ENCODE measurements at regions of chr16 and their contacts with region 1.

Region 1: DNA sequence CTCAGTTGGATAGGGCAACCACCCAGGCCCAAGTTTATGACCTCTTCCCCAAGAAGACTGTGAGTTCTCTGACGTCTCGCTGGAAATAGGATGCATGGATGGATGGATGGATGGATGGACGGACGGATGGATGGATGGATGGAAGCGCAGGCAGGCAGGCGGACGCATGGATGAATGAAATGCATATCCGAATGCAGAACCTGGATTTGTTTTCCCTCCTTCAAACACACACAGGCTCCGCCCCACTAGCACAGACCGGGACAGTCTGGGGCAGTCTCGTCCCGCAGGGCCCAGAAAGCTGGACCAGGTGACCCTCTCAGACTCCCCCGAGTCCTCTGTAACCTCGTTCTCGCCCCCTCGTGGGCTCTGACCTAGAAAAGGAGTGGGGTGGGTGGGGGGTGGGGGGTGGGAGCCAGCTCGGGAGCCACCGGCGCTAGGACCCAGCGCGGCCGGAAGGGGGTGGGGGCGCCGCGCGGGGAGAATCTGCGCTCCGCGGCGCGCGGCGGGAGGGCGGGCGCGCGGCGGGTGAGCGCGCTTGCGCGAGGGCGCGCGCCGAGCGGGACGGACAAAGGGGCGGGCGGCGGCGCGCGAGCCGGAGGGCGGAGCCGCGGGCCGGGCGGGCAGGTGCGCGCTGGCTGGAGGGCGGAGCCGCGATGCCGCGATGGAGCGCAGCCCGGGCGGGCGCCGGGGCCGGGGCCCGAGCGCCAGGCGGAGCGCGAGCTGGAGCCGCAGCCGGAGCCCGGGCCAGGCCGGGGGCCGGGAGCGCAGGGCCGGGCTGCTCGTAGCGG is at the start of gene SBK1:
- DNase-seq: peak; percentile 79 to 90 (median 88)
- H3K4me3 ChIP-seq: peak within 1 kb of the TSS; percentile 72 to 88
- H3K4me3 Mint-ChIP-seq: peak within 1 kb of the TSS; percentile 93 to 97 (median 95)
- H3K27ac ChIP-seq: peak within 1 kb of the TSS; percentile 75
- H3K27ac Mint-ChIP-seq: peak within 1 kb of the TSS; percentile 85 to 96 (median 94)
- H3K4me1 ChIP-seq: peaks cover 61% of the 10 kb centered on the region
- H3K4me1 Mint-ChIP-seq: peaks cover 38 to 69% (median 53%) of the 10 kb centered on the region in 4 donors
- H3K27me3 ChIP-seq: no peaks in the 10 kb centered on the region
- H3K27me3 Mint-ChIP-seq: no peaks in the 10 kb centered on the region
- total RNA-seq, gene SBK1: 14.2 to 14.6 TPM

Region 2: GRCh38 chr16:28042811-28043210 is 249.3 kb before region 1 on chr16:
- CTCF ChIA-PET with region 1: no interaction called
- POLR2A ChIA-PET with region 1: no interaction called
- intact Hi-C with region 1: no loop called
- DNase-seq: no peak
- H3K4me3 ChIP-seq: no peak overlapping the region
- H3K4me3 Mint-ChIP-seq: no peak overlapping the region
- H3K27ac ChIP-seq: no peak overlapping the region
- H3K27ac Mint-ChIP-seq: no peak overlapping the region
- H3K4me1 ChIP-seq: no peaks in the 10 kb centered on the region
- H3K4me1 Mint-ChIP-seq: no peaks in the 10 kb centered on the region
- H3K27me3 ChIP-seq: no peaks in the 10 kb centered on the region
- H3K27me3 Mint-ChIP-seq: peaks cover 6 to 10% of the 10 kb centered on the region in 2 donors

Region 3: GRCh38 chr16:28304214-28304613 is 12.1 kb after region 1 on chr16:
- CTCF ChIA-PET with region 1: interaction called, 26 read pairs
- POLR2A ChIA-PET with region 1: interaction called, 114 read pairs
- intact Hi-C with region 1: loop called (anchors 1 kb)
- DNase-seq: no peak
- H3K4me3 ChIP-seq: no peak overlapping the region
- H3K4me3 Mint-ChIP-seq: no peak overlapping the region
- H3K27ac ChIP-seq: no peak overlapping the region
- H3K27ac Mint-ChIP-seq: peak overlapping the region in 2 of 7 donors; percentile 14 to 46
- H3K4me1 ChIP-seq: peaks cover 44% of the 10 kb centered on the region
- H3K4me1 Mint-ChIP-seq: peaks cover 40 to 58% (median 48%) of the 10 kb centered on the region in 4 donors
- H3K27me3 ChIP-seq: no peaks in the 10 kb centered on the region
- H3K27me3 Mint-ChIP-seq: no peaks in the 10 kb centered on the region

Region 4: DNA sequence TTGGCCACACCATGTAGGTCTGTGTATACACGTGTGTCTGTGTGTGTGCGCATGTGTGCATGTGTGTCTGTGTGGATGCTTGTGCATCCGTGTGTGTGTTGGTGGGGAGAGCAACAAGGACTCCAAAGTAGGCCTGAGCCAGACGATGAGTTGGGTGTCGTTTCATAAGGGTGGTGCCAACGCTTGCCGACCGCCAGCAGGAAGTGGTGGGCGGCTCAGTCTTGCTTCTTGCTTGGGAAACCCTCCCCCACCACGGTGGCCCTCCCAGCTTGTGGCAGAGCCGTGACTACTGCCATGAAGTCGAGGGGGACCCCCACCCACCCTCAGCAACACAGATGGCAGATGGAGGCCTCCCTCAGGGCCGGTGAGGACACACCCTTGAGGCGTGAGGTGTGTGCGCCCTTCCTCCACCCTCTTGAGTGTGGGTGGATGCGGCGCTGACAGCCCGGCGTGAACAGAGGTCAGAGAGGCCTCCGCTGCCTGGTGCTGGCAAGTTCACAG is 17.8 kb after region 1 on chr16:
- CTCF ChIA-PET with region 1: interaction called, 28 read pairs
- POLR2A ChIA-PET with region 1: interaction called, 114 read pairs
- intact Hi-C with region 1: loop called (anchors 1 kb)
- DNase-seq: peak; percentile 85 to 95 (median 88)
- H3K4me3 ChIP-seq: peak overlapping the region in 1 of 2 donors; percentile 16
- H3K4me3 Mint-ChIP-seq: peak overlapping the region; percentile 8 to 83 (median 75)
- H3K27ac ChIP-seq: peak overlapping the region; percentile 72
- H3K27ac Mint-ChIP-seq: peak overlapping the region; percentile 91 to 99 (median 96)
- H3K4me1 ChIP-seq: peaks cover 53% of the 10 kb centered on the region
- H3K4me1 Mint-ChIP-seq: peaks cover 47 to 70% (median 55%) of the 10 kb centered on the region in 4 donors
- H3K27me3 ChIP-seq: no peaks in the 10 kb centered on the region
- H3K27me3 Mint-ChIP-seq: no peaks in the 10 kb centered on the region

Region 5: GRCh38 chr16:28317040-28317880 is 25.2 kb after region 1 on chr16:
- CTCF ChIA-PET with region 1: interaction called, 48 read pairs
- POLR2A ChIA-PET with region 1: interaction called, 114 read pairs
- intact Hi-C with region 1: no loop called
- DNase-seq: peak; percentile 58 to 72 (median 64)
- H3K4me3 ChIP-seq: no peak overlapping the region
- H3K4me3 Mint-ChIP-seq: peak overlapping the region in 5 of 8 donors; percentile 4 to 54 (median 48)
- H3K27ac ChIP-seq: no peak overlapping the region
- H3K27ac Mint-ChIP-seq: peak overlapping the region in 6 of 7 donors; percentile 41 to 88 (median 68)
- H3K4me1 ChIP-seq: peaks cover 30% of the 10 kb centered on the region
- H3K4me1 Mint-ChIP-seq: peaks cover 15 to 39% (median 18%) of the 10 kb centered on the region in 4 donors
- H3K27me3 ChIP-seq: no peaks in the 10 kb centered on the region
- H3K27me3 Mint-ChIP-seq: no peaks in the 10 kb centered on the region

Region 6: DNA sequence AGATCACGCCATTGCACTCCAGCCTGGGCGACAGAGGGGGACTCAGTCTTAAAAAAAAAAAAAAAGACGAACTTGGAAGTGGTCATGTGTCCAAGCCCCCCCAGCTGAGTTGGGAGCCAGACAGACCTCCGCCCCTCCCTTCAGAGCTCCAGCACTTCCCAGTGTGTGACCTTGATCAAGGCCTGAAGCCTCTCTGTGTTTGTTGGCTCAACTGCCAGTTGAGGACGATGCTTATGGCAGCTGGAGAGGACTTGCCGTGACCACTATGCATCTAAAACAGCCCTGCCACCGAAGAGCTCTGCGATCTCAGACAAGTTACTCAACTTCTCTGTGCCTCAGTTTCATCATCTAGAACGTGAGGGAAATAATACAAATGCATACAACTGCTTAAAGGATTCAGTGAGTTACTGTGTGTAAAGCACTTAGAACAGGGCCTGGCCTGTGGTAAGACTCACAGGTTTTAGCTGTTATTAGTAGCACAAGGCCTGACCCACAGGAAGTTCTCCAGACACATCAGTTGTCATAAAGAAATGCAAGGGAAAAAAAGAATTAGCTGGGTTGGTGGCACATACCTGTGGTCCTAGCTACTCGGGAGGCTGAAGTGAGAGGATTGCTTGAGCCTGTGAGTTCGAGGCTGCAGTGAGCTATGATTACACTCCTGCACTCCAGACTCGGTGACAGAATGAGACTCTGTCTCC is 221.6 kb after region 1 on chr16:
- CTCF ChIA-PET with region 1: no interaction called
- POLR2A ChIA-PET with region 1: no interaction called
- intact Hi-C with region 1: no loop called
- DNase-seq: no peak
- H3K4me3 ChIP-seq: no peak overlapping the region
- H3K4me3 Mint-ChIP-seq: no peak overlapping the region
- H3K27ac ChIP-seq: no peak overlapping the region
- H3K27ac Mint-ChIP-seq: peak overlapping the region in 6 of 7 donors; percentile 1 to 69 (median 46)
- H3K4me1 ChIP-seq: peaks cover 2% of the 10 kb centered on the region
- H3K4me1 Mint-ChIP-seq: peaks cover 0 to 6% (median 3%) of the 10 kb centered on the region in 4 donors
- H3K27me3 ChIP-seq: no peaks in the 10 kb centered on the region
- H3K27me3 Mint-ChIP-seq: no peaks in the 10 kb centered on the region

Measured in CD4-positive, alpha-beta memory T cell (primary cell).